Mammary epithelial cell (primary cell): ENCODE measurements at regions of chr11 and their contacts with region 1.

Region 1: GRCh38 chr11:71977743-71978418 is 20.8 kb upstream of the IL18BP start:
- DNase-seq: peak; percentile 33
- H3K4me3 ChIP-seq: no peak overlapping the region
- H3K27ac ChIP-seq: no peak overlapping the region
- H3K4me1 ChIP-seq: no peaks in the 10 kb centered on the region
- H3K27me3 ChIP-seq: no peaks in the 10 kb centered on the region
- CTCF ChIP-seq: peak; percentile 67 to 79

Region 2: DNA sequence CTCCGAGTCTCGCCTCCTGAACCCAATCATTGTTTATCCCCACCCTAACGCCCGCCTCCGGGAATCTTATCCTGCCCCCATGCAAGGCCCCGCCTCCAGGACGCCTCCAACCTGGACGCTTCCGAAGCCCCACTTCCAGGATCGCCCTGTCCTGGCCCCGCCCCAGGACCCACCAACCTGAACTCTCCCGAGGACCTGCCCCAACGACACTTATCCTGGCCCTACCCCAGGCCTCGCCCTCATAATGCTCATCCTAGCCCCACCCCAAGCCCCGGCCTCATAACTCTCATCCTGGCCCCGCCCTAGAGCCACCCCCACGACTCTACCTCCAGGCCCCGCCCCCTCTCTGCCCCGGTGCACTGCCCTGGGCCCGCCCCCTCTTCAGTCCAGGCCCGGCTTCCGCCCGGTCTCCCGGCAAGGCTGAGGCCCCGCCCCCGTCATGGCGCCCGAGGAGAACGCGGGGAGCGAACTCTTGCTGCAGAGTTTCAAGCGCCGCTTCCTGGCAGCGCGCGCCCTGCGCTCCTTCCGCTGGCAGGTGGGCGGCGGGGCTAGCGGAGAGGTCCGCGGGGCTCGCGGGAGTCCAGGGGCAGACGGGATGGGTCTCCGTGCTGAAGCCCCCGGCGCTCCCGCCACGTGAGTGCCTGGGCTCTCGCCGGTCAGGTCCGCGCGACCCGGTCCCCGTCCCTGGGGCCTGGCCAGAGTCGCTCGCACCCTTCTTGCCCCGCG is 190.6 kb before region 1 on chr11:
- CTCF ChIA-PET with region 1: no interaction called
- dilution Hi-C with region 1: no loop called
- in situ Hi-C with region 1: no loop called
- intact Hi-C with region 1: no loop called
- DNase-seq: peak; percentile 98
- H3K4me3 ChIP-seq: peak overlapping the region; percentile 58 to 67 (median 66)
- H3K27ac ChIP-seq: peak overlapping the region; percentile 89
- H3K4me1 ChIP-seq: peaks cover 13% of the 10 kb centered on the region
- H3K27me3 ChIP-seq: no peaks in the 10 kb centered on the region
- CTCF ChIP-seq: no peak

Region 3: DNA sequence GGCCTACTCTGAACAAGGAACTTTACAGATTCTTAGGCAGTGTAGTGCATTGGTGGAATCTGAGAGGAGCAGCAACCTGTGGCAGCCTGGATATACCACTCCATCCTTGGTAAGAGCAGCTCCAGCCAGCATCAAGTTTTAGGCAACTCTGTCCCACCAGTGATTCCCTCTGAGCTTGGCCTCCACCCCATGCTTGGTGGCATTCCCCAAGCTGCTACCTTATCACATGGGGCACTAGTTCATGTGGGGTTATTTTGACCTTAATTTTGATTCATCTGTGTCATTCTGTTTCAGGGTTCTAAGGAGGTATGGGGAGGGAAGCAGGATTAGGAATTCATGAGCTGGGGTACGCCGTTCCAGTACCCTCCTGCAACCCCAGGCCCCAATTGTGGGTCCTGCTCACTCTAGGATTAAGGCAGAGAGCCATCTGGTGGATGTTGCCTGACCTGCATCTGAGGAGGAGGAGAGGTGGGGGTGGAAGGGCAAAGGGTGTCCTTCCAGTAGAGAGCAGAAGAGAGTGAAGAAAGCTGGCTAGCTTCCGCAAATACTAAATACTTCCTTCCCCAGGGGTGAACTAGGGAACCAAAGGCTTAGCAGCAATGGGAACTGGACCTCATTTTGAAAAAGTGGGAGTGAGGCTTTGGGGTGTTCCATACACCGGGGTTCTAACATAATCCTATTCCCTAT is 113.3 kb after region 1 on chr11:
- CTCF ChIA-PET with region 1: no interaction called
- dilution Hi-C with region 1: no loop called
- in situ Hi-C with region 1: no loop called
- intact Hi-C with region 1: loop called (anchors 5 kb)
- DNase-seq: peak; percentile 38
- H3K4me3 ChIP-seq: no peak overlapping the region
- H3K27ac ChIP-seq: no peak overlapping the region
- H3K4me1 ChIP-seq: peaks cover 3% of the 10 kb centered on the region
- H3K27me3 ChIP-seq: no peaks in the 10 kb centered on the region
- CTCF ChIP-seq: peak; percentile 84 to 89

Region 4: GRCh38 chr11:72113220-72113808 is 135.4 kb after region 1 on chr11:
- CTCF ChIA-PET with region 1: no interaction called
- dilution Hi-C with region 1: no loop called
- in situ Hi-C with region 1: no loop called
- intact Hi-C with region 1: no loop called
- DNase-seq: peak; percentile 41
- H3K4me3 ChIP-seq: peak overlapping the region in 1 of 3 experiments; percentile 71
- H3K27ac ChIP-seq: peak overlapping the region; percentile 97
- H3K4me1 ChIP-seq: peaks cover 38% of the 10 kb centered on the region
- H3K27me3 ChIP-seq: no peaks in the 10 kb centered on the region
- CTCF ChIP-seq: no peak

Region 5: GRCh38 chr11:72238040-72238450 is 260.2 kb after region 1 on chr11:
- CTCF ChIA-PET with region 1: no interaction called
- dilution Hi-C with region 1: no loop called
- in situ Hi-C with region 1: no loop called
- intact Hi-C with region 1: loop called (anchors 2 kb)
- DNase-seq: peak; percentile 19
- H3K4me3 ChIP-seq: no peak overlapping the region
- H3K27ac ChIP-seq: no peak overlapping the region
- H3K4me1 ChIP-seq: peaks cover 9% of the 10 kb centered on the region
- H3K27me3 ChIP-seq: peaks cover under 1% of the 10 kb centered on the region
- CTCF ChIP-seq: peak; percentile 69 to 79